ENCODE measurements at regions of chr11 and their contacts with region 1.

Region 1: GRCh38 chr11:5288108-5288905 is 13.4 kb downstream of the OR51B4 start:
- DNase-seq: no peak
- H3K4me3 ChIP-seq: no peak overlapping the region
- H3K27ac ChIP-seq: no peak overlapping the region
- H3K4me1 ChIP-seq: no peaks in the 10 kb centered on the region
- H3K27me3 ChIP-seq: no peaks in the 10 kb centered on the region
- CTCF ChIP-seq: no peak
- EP300 ChIP-seq: no peak
- POLR2A ChIP-seq: no peak

Region 2: DNA sequence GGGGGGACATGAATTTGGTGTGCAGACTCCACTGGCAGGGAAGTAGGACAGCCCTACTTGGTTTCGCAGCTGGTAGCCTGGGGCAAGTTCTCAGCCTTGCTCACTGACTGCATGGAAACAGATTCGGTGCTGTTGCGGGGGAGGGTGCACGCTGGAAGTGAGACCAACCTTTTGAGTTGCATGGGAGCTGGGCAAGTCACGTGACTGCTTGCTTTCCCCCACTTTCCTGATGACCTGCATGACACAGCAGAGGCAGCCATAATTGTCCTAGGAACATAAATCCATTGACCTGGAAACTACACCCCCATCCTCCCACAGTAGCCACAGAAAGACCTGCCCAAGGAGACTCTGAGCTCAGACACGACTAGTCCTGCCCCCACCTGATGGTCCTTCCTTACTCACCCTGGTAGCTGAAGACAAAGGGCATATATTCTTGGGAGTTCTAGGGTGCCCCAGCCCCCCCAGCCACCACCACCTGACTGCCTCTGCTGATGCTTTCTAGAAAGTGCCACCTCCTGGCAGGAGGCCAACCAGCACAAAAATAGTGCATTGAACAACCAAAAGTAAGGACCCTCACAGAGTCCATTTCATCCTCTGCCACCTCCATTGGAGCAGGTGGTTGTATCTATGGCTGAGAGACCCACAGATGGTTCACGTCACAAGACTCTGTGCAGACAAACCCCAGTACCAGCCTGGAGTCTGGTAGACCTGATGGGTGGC is 29.6 kb before region 1 on chr11:
- in situ Hi-C with region 1: no loop called
- intact Hi-C with region 1: loop called (anchors 1 kb)
- DNase-seq: no peak
- H3K4me3 ChIP-seq: no peak overlapping the region
- H3K27ac ChIP-seq: no peak overlapping the region
- H3K4me1 ChIP-seq: no peaks in the 10 kb centered on the region
- H3K27me3 ChIP-seq: no peaks in the 10 kb centered on the region
- CTCF ChIP-seq: no peak
- EP300 ChIP-seq: no peak
- POLR2A ChIP-seq: no peak

Measured in transverse colon (tissue), 4 donors.